ENCODE measurements at regions of chr1 and their contacts with region 1.

Region 1: DNA sequence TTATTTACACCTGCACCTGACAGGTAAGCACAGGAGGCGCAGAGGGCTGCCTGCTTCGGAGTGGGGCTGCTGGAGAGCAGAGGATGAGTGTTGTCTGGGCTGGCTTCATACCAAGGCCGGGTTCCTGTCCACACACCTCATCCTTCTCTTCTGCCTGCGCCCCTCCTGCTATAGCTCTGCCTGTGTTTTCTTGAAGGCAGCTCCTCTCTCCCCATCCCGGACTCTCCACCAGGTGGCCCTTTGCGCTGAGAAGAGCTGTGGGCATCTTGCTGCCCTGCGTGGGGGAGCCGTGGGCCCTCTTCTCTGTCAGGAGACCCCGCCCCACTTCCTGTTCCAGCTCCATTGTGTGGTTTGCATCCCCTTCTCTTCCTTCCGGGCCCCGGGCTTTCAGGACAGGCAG is 35.0 kb downstream of the ARHGEF10L start:
- DNase-seq: no peak
- H3K4me3 ChIP-seq: no peak overlapping the region
- H3K27ac ChIP-seq: no peak overlapping the region
- H3K4me1 ChIP-seq: peaks cover 15 to 62% (median 43%) of the 10 kb centered on the region in 4 experiments
- H3K27me3 ChIP-seq: no peaks in the 10 kb centered on the region
- CTCF ChIP-seq: peak in 2 of 3 experiments; percentile 46 to 55; a peak in 3 of 4 replicates
- EP300 ChIP-seq: no peak
- POLR2A ChIP-seq: no peak
- RAD21 ChIP-seq: peak; percentile 40 to 50; a peak in 3 of 4 replicates

Region 2: GRCh38 chr1:17381161-17381560 is 193.4 kb before region 1 on chr1:
- CTCF ChIA-PET with region 1: no interaction called
- POLR2A ChIA-PET with region 1: no interaction called
- DNase-seq: no peak
- H3K4me3 ChIP-seq: no peak overlapping the region
- H3K27ac ChIP-seq: no peak overlapping the region
- H3K4me1 ChIP-seq: peaks cover 5 to 12% (median 10%) of the 10 kb centered on the region in 4 experiments; a peak in 6 of 7 replicates
- H3K27me3 ChIP-seq: no peaks in the 10 kb centered on the region
- CTCF ChIP-seq: no peak
- EP300 ChIP-seq: no peak
- POLR2A ChIP-seq: no peak
- RAD21 ChIP-seq: no peak

Region 3: DNA sequence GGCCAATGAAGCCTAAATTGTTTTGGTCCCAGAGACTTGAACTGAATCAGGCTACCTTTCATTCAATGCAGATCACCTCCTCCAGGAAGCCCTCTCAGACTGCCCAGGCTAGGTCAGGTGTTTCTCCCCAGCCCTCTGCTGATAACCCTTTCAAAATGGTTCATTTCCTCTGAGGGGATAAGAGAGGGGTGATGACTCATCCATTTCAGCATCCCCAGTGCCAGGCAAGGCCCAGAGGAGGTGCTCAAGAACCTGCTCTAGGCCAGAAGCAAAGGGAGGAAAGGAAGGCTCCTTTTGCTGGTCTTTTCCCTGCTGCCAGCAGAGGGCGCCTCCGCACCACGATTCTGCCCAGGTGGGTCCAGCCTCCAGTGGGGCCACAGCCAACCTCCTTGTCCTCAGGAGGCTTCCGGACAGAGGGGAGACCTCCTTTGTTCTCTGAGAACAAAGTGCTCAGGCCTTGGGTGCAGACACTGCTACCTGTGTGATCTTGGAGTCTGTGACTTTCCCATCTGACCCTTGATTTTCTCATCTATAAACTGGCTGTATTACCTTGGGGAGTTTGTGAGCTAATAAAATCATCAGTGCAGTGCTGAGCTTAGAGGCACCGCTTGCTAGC is 80.3 kb before region 1 on chr1:
- CTCF ChIA-PET with region 1: interaction called, 11 read pairs
- POLR2A ChIA-PET with region 1: no interaction called
- DNase-seq: peak; percentile 89 to 96
- H3K4me3 ChIP-seq: no peak overlapping the region
- H3K27ac ChIP-seq: no peak overlapping the region
- H3K4me1 ChIP-seq: no peaks in the 10 kb centered on the region
- H3K27me3 ChIP-seq: no peaks in the 10 kb centered on the region
- CTCF ChIP-seq: peak; percentile 98 to 100 (median 99)
- EP300 ChIP-seq: 0 out of 3 replicates have a peak, but pooled peaks of 1 of the 2 experiments have one; percentile 40
- POLR2A ChIP-seq: no peak
- RAD21 ChIP-seq: peak; percentile 100

Region 4: GRCh38 chr1:17531682-17532487 is 42.6 kb before region 1 on chr1:
- CTCF ChIA-PET with region 1: interaction called, 1,640 read pairs
- POLR2A ChIA-PET with region 1: interaction called, 4 read pairs
- DNase-seq: no peak
- H3K4me3 ChIP-seq: no peak overlapping the region
- H3K27ac ChIP-seq: no peak overlapping the region
- H3K4me1 ChIP-seq: peaks cover 0 to 16% (median 10%) of the 10 kb centered on the region in 4 experiments; a peak in 5 of 7 replicates
- H3K27me3 ChIP-seq: no peaks in the 10 kb centered on the region
- CTCF ChIP-seq: no peak
- EP300 ChIP-seq: no peak
- POLR2A ChIP-seq: no peak
- RAD21 ChIP-seq: no peak

Region 5: GRCh38 chr1:17561561-17561985 is 12.9 kb before region 1 on chr1:
- CTCF ChIA-PET with region 1: interaction called, 417 read pairs
- POLR2A ChIA-PET with region 1: interaction called, 16 read pairs
- DNase-seq: no peak
- H3K4me3 ChIP-seq: no peak overlapping the region
- H3K27ac ChIP-seq: 0 out of 2 replicates have a peak overlapping the region, but pooled peaks have one; percentile 30
- H3K4me1 ChIP-seq: peaks cover 11 to 62% (median 39%) of the 10 kb centered on the region in 4 experiments
- H3K27me3 ChIP-seq: no peaks in the 10 kb centered on the region
- CTCF ChIP-seq: no peak
- EP300 ChIP-seq: no peak
- POLR2A ChIP-seq: no peak
- RAD21 ChIP-seq: no peak

Region 6: GRCh38 chr1:17874710-17875109 is 300.2 kb after region 1 on chr1:
- CTCF ChIA-PET with region 1: no interaction called
- POLR2A ChIA-PET with region 1: no interaction called
- DNase-seq: no peak
- H3K4me3 ChIP-seq: no peak overlapping the region
- H3K27ac ChIP-seq: no peak overlapping the region
- H3K4me1 ChIP-seq: no peaks in the 10 kb centered on the region; a peak in 3 of 7 replicates
- H3K27me3 ChIP-seq: no peaks in the 10 kb centered on the region; a peak in 1 of 7 replicates
- CTCF ChIP-seq: no peak
- EP300 ChIP-seq: no peak
- POLR2A ChIP-seq: no peak
- RAD21 ChIP-seq: no peak